Activated CD8-positive, alpha-beta T cell treated with anti-CD3 and anti-CD28 coated beads for 36 hours (primary cell): ENCODE measurements at regions of chr1 and their contacts with region 1.

Region 1: DNA sequence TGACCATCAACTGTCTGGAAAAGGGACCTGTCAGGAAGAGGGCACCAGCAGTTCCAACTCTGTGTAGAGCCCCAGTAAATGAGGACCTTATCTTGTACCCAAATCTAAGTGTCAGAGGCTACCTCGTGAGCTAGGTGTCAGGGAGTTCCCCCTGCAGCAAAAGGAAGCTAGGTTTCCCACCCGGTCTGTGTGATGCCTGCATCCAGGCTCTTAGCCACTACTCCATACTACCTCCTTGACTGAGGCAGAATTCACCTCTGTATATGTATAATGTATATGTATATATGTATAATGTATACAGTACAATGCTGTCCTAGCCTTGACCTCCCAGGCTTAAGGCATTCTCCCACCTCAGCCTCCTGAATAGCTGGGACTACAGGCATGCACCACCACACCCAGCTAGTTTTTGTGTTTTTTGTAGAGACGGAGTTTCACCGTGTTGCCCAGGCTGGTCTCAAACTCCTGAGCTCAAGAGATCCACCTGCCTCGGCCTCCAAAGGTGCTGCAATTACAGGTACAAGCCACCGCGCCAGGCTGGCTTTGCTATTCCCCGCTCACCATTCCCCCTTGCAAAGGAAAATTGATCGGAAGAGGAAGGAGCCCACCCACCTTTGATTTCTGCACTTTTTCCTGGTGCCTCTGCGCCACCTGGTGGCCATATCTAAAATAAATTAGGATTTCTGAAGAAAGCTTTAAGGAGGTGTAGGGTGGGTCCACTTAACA is 15.7 kb upstream of the LUZP1 start:
- DNase-seq: peak; percentile 50
- ATAC-seq: peak; percentile 34
- H3K4me3 Mint-ChIP-seq: peak overlapping the region; percentile 60
- H3K27ac Mint-ChIP-seq: no peak overlapping the region
- H3K4me1 Mint-ChIP-seq: peaks cover 3% of the 10 kb centered on the region
- H3K27me3 Mint-ChIP-seq: peaks cover 11% of the 10 kb centered on the region
- CTCF ChIP-seq: peak; percentile 92

Region 2: GRCh38 chr1:23035823-23036452 is 148.4 kb before region 1 on chr1:
- CTCF ChIA-PET with region 1: interaction called, 10 read pairs
- POLR2A ChIA-PET with region 1: no interaction called
- intact Hi-C with region 1: no loop called
- DNase-seq: no peak
- ATAC-seq: no peak
- H3K4me3 Mint-ChIP-seq: no peak overlapping the region
- H3K27ac Mint-ChIP-seq: no peak overlapping the region
- H3K4me1 Mint-ChIP-seq: peaks cover 48% of the 10 kb centered on the region
- H3K27me3 Mint-ChIP-seq: no peaks in the 10 kb centered on the region
- CTCF ChIP-seq: no peak

Region 3: GRCh38 chr1:23088027-23088426 is 96.3 kb before region 1 on chr1:
- CTCF ChIA-PET with region 1: interaction called, 748 read pairs
- POLR2A ChIA-PET with region 1: interaction called, 4 read pairs
- intact Hi-C with region 1: no loop called
- DNase-seq: no peak
- ATAC-seq: no peak
- H3K4me3 Mint-ChIP-seq: no peak overlapping the region
- H3K27ac Mint-ChIP-seq: peak overlapping the region; percentile 7
- H3K4me1 Mint-ChIP-seq: no peaks in the 10 kb centered on the region
- H3K27me3 Mint-ChIP-seq: no peaks in the 10 kb centered on the region
- CTCF ChIP-seq: no peak

Region 4: DNA sequence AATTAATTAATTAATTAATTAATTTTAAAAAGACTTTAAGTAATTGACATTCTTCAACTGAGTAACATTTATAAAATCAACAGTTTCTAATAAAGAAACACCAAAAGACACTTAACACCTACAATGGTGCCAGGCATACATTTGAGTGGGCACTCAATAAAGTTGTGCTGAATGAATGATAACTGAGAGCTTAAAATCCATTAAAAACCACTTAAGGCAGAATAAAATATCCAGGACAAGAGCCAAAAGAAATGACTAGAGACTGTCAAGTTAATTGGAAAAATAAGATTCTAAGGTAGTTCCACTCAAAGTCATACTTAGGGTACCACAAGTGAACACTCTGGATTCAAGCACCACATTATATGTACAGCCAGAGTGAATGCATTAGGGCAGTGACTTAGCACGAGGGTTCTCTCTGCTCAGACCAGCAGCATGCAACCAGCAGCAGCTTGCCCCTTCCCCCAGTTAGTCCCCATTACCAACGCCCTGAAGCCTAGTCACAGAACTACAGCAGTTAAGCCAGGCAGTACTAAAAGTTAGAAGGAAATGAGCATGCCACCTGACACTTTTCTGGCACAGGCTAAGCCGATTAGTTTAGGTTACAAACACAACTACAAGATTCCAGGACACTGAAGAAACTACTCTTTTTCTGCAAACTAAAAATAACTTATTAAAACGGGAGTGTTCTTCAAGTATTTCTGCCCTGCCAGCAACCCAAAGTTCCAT is 62.2 kb before region 1 on chr1:
- CTCF ChIA-PET with region 1: interaction called, 47 read pairs
- POLR2A ChIA-PET with region 1: interaction called, 4 read pairs
- intact Hi-C with region 1: no loop called
- DNase-seq: no peak
- ATAC-seq: no peak
- H3K4me3 Mint-ChIP-seq: no peak overlapping the region
- H3K27ac Mint-ChIP-seq: no peak overlapping the region
- H3K4me1 Mint-ChIP-seq: peaks cover 41% of the 10 kb centered on the region
- H3K27me3 Mint-ChIP-seq: no peaks in the 10 kb centered on the region
- CTCF ChIP-seq: no peak

Region 5: DNA sequence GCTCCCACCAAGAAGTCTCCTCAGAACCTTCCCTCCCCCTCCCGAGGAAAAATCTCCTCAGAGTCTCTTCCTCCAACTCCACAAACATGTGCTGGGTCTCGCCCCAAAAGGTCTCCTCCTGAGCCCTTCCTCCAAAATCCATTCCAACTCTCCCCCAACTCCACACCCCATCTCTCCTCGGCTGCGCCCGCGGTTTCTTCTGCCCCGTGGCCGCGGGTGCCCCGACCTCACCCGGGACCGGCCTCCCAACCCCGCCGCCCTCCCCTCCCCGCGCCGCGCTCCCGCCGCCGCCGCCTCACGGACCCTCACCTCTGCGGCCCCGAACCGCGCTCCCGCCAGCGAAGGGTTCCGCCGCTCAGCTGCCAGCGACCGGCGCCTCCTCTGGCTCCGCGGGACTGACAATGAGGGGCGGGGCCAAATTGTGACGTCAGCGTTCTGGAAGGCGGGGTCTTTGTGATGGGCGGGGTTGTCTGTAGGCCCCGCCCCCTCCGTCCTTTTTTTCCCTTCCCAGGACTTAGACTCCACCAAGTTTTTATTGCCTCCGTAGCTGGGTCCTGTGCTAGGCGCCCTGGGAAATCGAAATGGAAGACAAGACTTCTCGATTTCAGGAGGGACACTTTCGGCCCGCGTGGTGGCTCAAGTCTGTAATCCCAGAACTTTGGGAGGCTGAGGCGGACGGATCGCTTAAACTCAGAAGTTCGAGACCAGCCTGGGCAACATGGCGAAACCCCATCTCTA is 15.7 kb before region 1 on chr1 and contains the start of gene LUZP1:
- CTCF ChIA-PET with region 1: interaction called, 93 read pairs
- POLR2A ChIA-PET with region 1: no interaction called
- intact Hi-C with region 1: no loop called
- DNase-seq: peak; percentile 90
- ATAC-seq: peak; percentile 92
- H3K4me3 Mint-ChIP-seq: peak within 1 kb of the TSS; percentile 97
- H3K27ac Mint-ChIP-seq: peak within 1 kb of the TSS; percentile 92
- H3K4me1 Mint-ChIP-seq: peaks cover 37% of the 10 kb centered on the region
- H3K27me3 Mint-ChIP-seq: no peaks in the 10 kb centered on the region
- CTCF ChIP-seq: no peak
- total RNA-seq, gene LUZP1: 14.9 to 16.0 TPM

Region 6: DNA sequence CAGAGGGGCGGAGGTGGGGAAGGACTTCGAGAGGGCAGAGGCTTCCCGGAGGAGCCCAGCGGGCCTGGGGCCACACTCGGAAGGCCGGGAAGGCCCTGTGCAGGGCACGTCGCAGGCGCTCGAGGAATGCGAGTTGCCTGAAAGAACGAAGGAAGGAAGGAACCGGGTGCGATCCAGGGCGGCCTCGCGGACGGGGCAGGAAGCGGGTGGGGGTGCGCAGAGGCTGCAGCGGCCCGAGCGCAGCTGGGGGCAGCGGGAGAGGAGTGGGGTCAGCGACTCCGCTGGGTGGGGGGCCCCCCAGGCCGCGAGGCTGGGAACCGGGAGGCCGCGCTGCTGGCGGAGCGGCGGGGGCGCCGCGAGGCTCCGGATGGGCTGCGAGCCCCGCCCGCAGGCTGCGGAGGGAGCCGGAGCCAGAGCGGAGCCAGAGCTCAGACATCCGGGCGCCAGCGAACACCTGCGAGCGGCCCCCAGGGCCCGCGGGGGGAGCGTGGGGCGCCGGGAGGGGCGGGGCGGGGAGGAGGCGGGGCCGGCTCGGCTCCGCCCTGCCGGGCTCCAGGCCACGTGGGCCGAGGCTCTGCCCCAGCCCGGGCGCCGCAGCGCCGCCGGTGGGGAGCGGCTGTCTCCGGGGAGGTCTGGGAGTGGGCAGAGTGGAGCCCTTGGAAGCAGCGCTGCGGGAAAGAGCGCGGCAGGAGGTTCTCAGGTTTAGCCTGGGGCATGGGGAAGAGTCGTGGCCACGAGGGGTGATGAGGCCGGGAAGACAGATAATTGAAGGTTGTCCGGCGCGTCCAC is 370.3 kb after region 1 on chr1:
- CTCF ChIA-PET with region 1: no interaction called
- POLR2A ChIA-PET with region 1: no interaction called
- intact Hi-C with region 1: no loop called
- DNase-seq: peak; percentile 85
- ATAC-seq: peak; percentile 78
- H3K4me3 Mint-ChIP-seq: peak overlapping the region; percentile 89
- H3K27ac Mint-ChIP-seq: peak overlapping the region; percentile 84
- H3K4me1 Mint-ChIP-seq: peaks cover 47% of the 10 kb centered on the region
- H3K27me3 Mint-ChIP-seq: no peaks in the 10 kb centered on the region
- CTCF ChIP-seq: no peak